ENCODE measurements at regions of chr15 and their contacts with region 1.

Region 1: DNA sequence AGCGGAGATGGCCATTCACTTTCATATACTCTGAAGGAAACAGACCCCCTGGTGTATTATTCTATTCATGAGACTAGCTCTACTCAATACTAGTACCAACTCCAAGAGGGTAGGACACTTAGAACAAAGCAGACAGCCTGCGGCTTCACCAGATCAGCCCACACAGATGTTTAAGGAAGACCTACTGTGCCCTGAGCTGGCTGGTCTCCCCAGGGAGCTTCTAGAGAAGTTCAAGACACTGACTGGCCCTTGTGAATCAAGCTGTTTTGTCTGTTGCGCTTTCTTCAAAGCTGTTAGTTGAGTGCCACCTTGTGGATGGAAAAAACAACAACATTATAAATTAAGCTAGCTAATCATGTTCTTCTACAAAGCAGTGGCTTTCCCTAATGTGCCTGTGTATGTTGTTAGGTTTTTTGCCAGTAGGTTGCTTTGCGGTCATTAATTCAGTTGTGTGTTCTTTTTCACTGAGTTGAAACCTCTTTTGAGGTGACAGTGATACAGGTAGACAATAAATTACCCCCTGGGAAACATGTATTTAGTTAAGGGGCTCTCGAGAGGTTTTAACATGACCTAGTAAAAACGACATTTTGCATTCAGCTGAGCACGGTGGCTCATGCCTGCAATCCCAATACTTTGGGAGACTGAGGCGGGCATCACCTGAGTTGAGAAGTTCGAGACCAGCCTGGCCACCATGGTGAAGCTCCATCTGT is 64.2 kb upstream of the MYZAP start:
- DNase-seq: peak; percentile 80
- ATAC-seq: peak; percentile 71
- H3K4me3 ChIP-seq: no peak overlapping the region
- H3K27ac ChIP-seq: no peak overlapping the region
- H3K4me1 ChIP-seq: peaks cover 19% of the 10 kb centered on the region
- H3K27me3 ChIP-seq: no peaks in the 10 kb centered on the region
- CTCF ChIP-seq: peak; percentile 68

Region 2: GRCh38 chr15:57146506-57147201 is 380.9 kb before region 1 on chr15:
- CTCF ChIA-PET with region 1: no interaction called
- POLR2A ChIA-PET with region 1: no interaction called
- intact Hi-C with region 1: loop called (anchors 5 kb)
- DNase-seq: peak; percentile 63
- ATAC-seq: peak; percentile 46; the same call in 1 of the 2 replicates
- H3K4me3 ChIP-seq: 0 out of 2 replicates have a peak overlapping the region, but pooled peaks have one; percentile 16
- H3K27ac ChIP-seq: no peak overlapping the region
- H3K4me1 ChIP-seq: no peaks in the 10 kb centered on the region
- H3K27me3 ChIP-seq: no peaks in the 10 kb centered on the region
- CTCF ChIP-seq: peak; percentile 72

Region 3: DNA sequence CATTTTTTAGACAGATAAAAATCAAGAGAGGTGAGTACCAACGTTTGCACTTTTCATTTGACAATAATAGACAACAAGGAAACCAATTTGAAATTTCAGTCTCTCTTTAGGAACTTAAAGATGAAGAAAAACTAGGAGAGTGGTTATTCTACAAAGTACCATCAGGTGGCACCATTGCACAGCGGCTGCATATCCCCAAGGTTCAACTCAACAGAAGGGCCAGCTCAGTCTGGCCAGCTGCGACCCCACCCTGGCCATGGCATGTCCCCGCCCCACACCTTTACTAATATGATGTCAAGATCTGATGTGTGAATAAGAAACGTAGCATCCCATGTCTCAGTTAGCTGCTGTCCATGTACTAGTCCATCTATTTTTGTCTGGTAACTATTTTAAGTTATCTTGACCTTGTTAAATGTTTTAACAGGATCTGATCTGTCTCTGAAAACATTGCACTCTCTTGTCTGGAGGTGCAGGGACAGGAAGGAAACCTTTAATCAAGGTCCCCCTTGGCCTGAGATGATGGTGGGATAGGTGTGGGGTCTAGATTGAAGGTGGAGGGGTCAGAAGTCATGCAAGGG is 186.8 kb before region 1 on chr15:
- CTCF ChIA-PET with region 1: interaction called, 35 read pairs
- POLR2A ChIA-PET with region 1: interaction called, 3 read pairs
- intact Hi-C with region 1: loop called (anchors 1 kb)
- DNase-seq: peak; percentile 66
- ATAC-seq: peak; percentile 66
- H3K4me3 ChIP-seq: no peak overlapping the region
- H3K27ac ChIP-seq: no peak overlapping the region
- H3K4me1 ChIP-seq: no peaks in the 10 kb centered on the region
- H3K27me3 ChIP-seq: no peaks in the 10 kb centered on the region
- CTCF ChIP-seq: peak; percentile 87

Region 4: GRCh38 chr15:57375827-57376695 is 151.5 kb before region 1 on chr15 and contains the start of gene CGNL1:
- CTCF ChIA-PET with region 1: interaction called, 4 read pairs
- POLR2A ChIA-PET with region 1: no interaction called
- intact Hi-C with region 1: loop called (anchors 10 kb)
- DNase-seq: peak; percentile 15
- ATAC-seq: peak; percentile 60
- H3K4me3 ChIP-seq: peak within 1 kb of the TSS; percentile 75
- H3K27ac ChIP-seq: no peak within 1 kb of the TSS
- H3K4me1 ChIP-seq: 0 out of 2 replicates have a peak, but pooled peaks cover 7% of the 10 kb centered on the region
- H3K27me3 ChIP-seq: no peaks in the 10 kb centered on the region
- CTCF ChIP-seq: no peak
- total RNA-seq, gene CGNL1: 0.66 and 0.86 TPM in 2 replicates

Region 5: GRCh38 chr15:57462381-57462780 is 65.2 kb before region 1 on chr15:
- CTCF ChIA-PET with region 1: interaction called, 11 read pairs
- POLR2A ChIA-PET with region 1: no interaction called
- intact Hi-C with region 1: loop called (anchors 1 kb)
- DNase-seq: peak; percentile 81
- ATAC-seq: peak; percentile 99
- H3K4me3 ChIP-seq: no peak overlapping the region
- H3K27ac ChIP-seq: peak overlapping the region; percentile 80; the same call in 1 of the 2 replicates
- H3K4me1 ChIP-seq: peaks cover 21% of the 10 kb centered on the region
- H3K27me3 ChIP-seq: no peaks in the 10 kb centered on the region
- CTCF ChIP-seq: peak; percentile 54; the same call in 1 of the 2 replicates

Region 6: GRCh38 chr15:57485869-57486268 is 41.7 kb before region 1 on chr15:
- CTCF ChIA-PET with region 1: no interaction called
- POLR2A ChIA-PET with region 1: no interaction called
- intact Hi-C with region 1: loop called (anchors 5 kb)
- DNase-seq: peak; percentile 90
- ATAC-seq: peak; percentile 100
- H3K4me3 ChIP-seq: no peak overlapping the region
- H3K27ac ChIP-seq: peak overlapping the region; percentile 60
- H3K4me1 ChIP-seq: peaks cover 22% of the 10 kb centered on the region
- H3K27me3 ChIP-seq: no peaks in the 10 kb centered on the region
- CTCF ChIP-seq: no peak

Region 7: GRCh38 chr15:57595011-57595866 is 67.7 kb after region 1 on chr15:
- CTCF ChIA-PET with region 1: no interaction called
- POLR2A ChIA-PET with region 1: no interaction called
- intact Hi-C with region 1: no loop called
- DNase-seq: no peak
- ATAC-seq: no peak
- H3K4me3 ChIP-seq: no peak overlapping the region
- H3K27ac ChIP-seq: no peak overlapping the region
- H3K4me1 ChIP-seq: peaks cover 58% of the 10 kb centered on the region
- H3K27me3 ChIP-seq: no peaks in the 10 kb centered on the region
- CTCF ChIP-seq: no peak

Region 8: GRCh38 chr15:57640935-57641682 is 113.6 kb after region 1 on chr15:
- CTCF ChIA-PET with region 1: no interaction called
- POLR2A ChIA-PET with region 1: no interaction called
- intact Hi-C with region 1: no loop called
- DNase-seq: peak; percentile 38
- ATAC-seq: 0 out of 2 replicates have a peak, but pooled peaks have one; percentile 49
- H3K4me3 ChIP-seq: no peak overlapping the region
- H3K27ac ChIP-seq: no peak overlapping the region
- H3K4me1 ChIP-seq: peaks cover 8% of the 10 kb centered on the region; the same call in 1 of the 2 replicates
- H3K27me3 ChIP-seq: no peaks in the 10 kb centered on the region
- CTCF ChIP-seq: peak; percentile 48; the same call in 1 of the 2 replicates

Measured in PC-3 (cell line).